Activated CD8-positive, alpha-beta memory T cell treated with anti-CD3 and anti-CD28 coated beads, Interleukin-2, amount 10 ng/mL, durations not matched to agents 7 days and 5 days (primary cell): ENCODE measurements at regions of chr10 and their contacts with region 1.

Region 1: DNA sequence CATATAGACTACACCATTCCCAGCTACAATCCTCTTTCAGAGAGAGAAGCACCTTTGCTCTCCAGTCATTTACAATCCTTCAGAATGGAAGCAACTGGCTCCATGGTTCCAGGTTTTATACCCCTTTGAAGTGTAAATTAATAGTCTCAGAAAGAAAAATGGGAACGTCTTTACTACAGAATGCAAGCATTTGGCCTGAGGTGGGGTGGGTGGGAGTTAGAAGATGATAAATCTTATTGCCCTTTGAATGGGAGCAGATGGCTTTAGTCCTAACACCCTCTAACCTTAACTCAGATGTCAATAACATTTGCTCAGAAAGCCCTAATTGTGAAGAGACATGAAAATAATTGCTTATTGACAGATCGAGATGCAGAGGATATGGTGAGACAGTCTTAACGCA is 84.2 kb upstream of the KCNMA1 start:
- DNase-seq: no peak
- ATAC-seq: no peak
- H3K4me3 Mint-ChIP-seq: no peak overlapping the region
- H3K27ac Mint-ChIP-seq: no peak overlapping the region
- H3K4me1 Mint-ChIP-seq: peaks cover 2% of the 10 kb centered on the region
- H3K27me3 Mint-ChIP-seq: peaks cover 18% of the 10 kb centered on the region

Region 2: DNA sequence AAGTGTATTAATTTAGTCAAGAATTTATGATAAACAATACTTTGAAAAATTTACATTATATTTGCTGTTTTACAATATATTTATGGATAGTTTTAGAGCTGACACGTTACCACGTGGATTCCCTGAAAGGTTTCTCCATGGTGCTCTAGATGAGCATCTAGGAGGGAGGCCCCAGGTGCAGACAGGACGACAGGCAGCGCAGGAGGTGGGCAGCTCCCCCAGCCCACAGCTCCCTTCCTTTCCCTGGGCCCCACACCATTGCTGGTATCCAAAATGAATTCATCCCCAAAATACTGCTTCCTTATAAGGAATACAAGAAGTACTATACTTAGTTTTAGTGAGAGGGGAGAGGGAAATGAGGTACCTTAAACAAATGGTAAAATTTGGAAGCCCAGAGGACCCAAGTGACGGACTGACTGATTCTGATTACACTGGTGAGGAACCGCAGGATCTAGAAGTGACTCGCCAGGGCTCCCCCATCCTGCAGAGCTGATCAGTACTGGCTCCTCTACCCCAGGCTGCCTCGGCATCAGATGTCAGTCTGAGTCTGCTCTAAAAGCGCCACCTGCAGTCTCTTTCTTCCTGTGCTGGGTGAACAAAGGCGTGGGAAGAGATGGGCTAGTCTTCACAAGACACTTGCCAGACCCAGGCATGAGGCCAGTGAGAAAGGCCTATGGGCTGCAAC is 115.6 kb after region 1 on chr10:
- CTCF ChIA-PET with region 1: interaction called, 31 read pairs
- DNase-seq: peak; percentile 89
- ATAC-seq: peak; percentile 87
- H3K4me3 Mint-ChIP-seq: no peak overlapping the region
- H3K27ac Mint-ChIP-seq: no peak overlapping the region
- H3K4me1 Mint-ChIP-seq: peaks cover 15% of the 10 kb centered on the region
- H3K27me3 Mint-ChIP-seq: no peaks in the 10 kb centered on the region